ENCODE measurements at regions of chr2 and their contacts with region 1.

Region 1: DNA sequence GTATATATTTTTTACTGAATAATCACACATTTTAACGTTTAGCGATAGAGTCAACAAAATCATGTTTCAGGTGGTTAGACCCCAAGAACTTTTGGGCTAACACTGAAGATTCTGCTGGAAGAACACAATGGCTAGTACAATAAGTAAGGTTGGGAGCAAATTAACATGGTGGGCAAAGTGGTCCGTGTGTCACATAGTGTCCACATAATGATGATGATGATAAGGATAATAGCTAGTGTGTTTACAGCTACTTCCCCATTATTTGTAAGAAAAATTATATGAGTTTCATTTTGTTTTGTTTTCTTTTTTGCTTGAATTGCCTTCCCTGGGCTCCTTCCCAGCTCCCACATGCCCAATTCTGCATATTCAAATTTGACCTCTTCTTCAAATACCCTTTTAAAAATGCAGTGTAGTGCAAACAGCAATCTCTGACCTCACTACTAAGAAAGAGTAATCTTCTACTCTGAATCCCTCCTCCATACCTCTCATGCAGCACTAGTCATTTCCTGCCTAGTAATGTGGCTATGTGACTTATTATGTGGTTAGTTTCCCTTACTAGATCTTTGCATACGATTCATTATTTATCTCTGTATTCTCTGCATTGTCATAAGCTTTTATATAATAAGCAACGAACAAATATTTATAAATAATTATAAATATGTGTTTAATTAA is 16.9 kb upstream of the VPS54 start:
- DNase-seq: peak; percentile 59
- H3K4me3 ChIP-seq: no peak overlapping the region
- H3K27ac ChIP-seq: no peak overlapping the region
- H3K27me3 ChIP-seq: no peaks in the 10 kb centered on the region
- CTCF ChIP-seq: no peak

Region 2: DNA sequence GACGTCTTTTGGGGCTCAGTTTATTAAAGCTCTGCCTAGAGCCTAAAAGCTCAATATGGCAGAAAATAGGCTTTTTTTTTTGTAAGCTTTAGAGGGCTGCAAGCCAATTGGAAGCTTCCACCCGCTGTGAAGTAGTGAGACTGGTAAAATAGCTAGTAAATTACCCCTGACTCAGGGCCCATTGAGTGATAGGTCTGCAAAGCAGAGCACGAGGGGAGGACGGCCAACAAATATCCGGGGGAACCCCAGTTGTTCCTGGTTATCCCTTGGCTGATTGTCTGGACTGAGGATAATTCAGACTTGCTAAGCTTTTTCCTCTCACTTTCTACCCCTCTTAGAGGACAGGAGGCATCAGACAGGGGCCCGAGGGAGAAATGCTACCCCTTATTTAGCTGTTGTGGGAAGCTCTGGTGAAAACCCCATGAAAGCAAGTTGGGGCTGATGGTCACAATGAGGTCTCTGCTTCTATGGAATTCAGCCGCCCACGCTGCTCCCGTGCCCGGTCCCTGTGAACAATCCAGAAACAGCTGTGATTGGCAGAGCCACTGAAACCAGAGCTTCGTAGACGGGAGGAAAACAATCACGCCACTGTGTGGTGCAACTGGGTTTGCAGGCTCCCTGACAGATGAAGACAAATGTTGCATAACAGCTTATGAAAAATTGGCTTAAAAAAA is 275.9 kb after region 1 on chr2:
- in situ Hi-C with region 1: loop called (anchors 25 kb)
- DNase-seq: peak; percentile 97
- H3K4me3 ChIP-seq: no peak overlapping the region
- H3K27ac ChIP-seq: peak overlapping the region; percentile 75
- H3K27me3 ChIP-seq: peaks cover 3% of the 10 kb centered on the region
- CTCF ChIP-seq: peak; percentile 72

Measured in brain microvascular endothelial cell (primary cell).